ENCODE measurements at regions of chr2 and their contacts with region 1.

Region 1: DNA sequence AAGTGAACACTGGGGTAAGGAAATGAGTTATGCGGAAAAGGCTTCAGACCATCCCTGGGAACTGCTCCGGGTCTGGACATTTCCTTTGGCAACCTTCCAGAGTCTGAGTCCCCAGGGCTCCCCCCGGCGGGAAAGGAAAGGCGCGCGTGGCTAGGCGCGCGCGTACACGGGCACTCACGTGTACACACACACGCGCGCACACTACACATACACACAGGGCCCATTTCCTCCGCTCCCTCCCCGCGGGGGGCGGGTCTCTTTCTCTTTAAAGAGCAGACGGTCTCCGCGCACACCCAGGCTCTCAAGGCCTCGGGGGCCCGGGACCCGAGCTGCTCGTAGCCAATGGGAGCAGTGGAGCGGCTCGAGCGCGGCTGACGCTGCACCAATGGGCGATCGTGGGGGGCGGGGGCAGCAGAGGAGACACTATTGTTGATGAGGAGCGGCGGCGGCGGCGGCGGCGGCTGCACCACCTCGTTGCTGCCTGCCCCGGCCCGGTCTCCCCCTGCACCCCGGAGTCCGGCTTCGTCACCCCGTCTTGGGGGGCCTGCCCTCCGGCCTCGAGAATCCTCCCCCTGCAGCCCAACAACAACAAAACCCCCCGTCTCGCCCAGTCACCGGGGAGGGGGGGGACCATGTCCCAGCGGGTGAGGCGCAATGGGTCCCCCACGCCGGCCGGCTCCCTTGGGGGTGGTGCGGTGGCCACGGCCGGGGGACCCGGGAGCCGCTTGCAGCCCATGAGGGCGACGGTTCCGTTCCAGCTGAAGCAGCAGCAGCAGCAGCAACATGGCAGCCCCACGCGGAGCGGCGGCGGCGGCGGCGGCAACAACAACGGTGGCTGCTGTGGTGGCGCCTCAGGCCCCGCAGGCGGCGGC is at the start of gene FAM117B:
- DNase-seq: peak; percentile 99 to 100
- H3K4me3 ChIP-seq: peak within 1 kb of the TSS; percentile 98 to 99
- H3K27ac ChIP-seq: peak within 1 kb of the TSS; percentile 89 to 94
- H3K4me1 ChIP-seq: peaks cover 0 to 30% (median 6%) of the 10 kb centered on the region in 4 donors
- H3K27me3 ChIP-seq: no peaks in the 10 kb centered on the region
- CTCF ChIP-seq: no peak

Region 2: DNA sequence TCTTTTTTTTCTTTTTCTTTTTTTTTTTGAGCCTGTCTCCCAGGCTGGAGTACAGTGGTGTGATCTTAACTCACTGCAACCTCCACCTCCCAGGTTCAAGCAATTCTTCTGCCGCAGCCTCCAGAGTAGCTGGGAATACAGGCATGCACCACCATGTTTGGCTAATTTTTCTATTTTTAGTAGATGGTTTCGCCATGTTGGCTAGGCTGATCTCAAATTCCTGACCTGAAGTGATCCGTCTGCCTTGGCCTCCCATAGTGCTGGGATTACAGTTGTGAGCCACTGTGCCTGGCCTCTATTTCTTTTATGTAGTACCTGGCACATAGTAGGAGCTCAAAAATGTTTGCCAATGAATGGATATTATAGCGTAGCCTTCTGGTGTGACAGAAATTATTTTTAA is 1525.6 kb before region 1 on chr2:
- intact Hi-C with region 1: no loop called
- DNase-seq: no peak
- H3K4me3 ChIP-seq: no peak overlapping the region
- H3K27ac ChIP-seq: no peak overlapping the region
- H3K4me1 ChIP-seq: no peaks in the 10 kb centered on the region
- H3K27me3 ChIP-seq: no peaks in the 10 kb centered on the region
- CTCF ChIP-seq: no peak

Region 3: DNA sequence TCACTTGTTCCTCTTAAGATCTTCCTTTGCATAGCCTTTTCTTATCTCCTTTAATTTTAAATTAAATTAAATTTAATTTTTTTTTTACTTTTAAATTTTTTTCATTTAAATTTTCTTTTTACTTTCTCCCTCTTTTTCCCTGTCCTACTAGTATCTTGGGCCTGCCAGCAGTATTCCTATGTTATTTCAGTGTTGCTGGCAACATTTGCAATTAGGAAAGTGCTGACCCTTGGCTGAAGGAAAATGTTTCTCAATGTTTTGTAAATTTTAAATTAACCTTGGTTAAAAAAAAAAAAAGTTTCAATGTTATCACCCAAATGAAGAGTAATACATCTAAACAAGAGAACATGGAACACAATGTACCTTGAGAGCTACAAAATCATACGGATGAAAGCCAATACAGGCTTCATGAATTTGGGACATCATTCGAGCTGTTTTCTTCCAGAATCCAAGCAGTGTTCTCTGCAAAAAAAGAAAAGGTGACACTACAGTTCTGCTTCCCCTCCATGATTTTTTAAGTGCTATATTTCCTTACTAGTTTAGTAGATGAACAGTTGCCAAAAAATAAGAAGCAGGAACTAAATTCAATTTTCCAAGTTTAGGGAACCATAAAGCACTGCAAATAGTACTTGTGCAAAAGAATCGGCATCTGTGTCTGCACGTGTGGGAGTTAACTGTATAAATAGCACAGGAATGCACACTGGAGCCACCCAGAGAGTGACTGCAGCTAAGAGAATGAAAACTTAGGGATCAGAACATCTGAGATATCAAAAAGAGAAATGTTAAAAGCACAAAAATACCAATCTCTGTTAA is 181.0 kb after region 1 on chr2:
- intact Hi-C with region 1: loop called (anchors 10 kb)
- DNase-seq: peak in 1 of 2 donors; percentile 29
- H3K4me3 ChIP-seq: peak overlapping the region in 1 of 2 donors; percentile 9
- H3K27ac ChIP-seq: peak overlapping the region; percentile 68 to 70
- H3K4me1 ChIP-seq: peaks cover 0 to 34% (median 19%) of the 10 kb centered on the region in 4 donors
- H3K27me3 ChIP-seq: no peaks in the 10 kb centered on the region
- CTCF ChIP-seq: no peak

Region 4: DNA sequence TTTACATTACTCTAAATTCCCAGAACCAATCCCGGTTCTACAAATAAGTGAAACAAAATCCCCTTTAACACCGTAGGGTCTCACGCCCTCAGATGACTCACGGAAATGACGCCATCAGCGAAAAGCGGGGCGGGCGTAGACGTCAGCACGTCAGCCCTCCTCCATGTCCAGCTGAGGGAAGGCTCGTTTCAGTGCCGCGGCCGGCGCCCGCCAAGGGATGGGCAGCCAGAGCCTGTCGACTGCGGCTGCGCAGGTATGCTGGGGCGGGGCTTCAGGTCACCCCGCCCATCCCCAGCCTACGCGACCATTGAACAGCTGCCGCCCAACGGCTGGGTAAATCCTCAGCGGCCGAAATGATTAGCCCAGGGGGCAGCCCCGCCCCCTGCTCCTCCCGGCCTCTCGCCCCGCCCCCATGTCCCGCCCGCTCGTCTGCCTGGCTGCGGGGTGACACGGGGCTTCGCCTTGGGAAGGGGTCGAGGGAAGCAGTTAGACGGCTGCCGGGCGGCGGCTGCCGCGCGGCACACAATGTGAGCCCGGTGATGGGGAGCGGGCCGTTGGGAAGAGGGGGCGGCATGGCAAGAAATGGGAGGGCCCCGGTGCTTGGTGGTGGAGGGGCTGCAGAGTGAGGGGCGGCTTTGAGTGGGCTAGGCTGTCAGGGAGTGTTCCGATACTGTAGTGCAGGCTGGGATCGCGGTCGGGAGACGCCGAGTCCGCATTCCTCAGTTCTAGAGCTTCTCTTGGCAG is 379.8 kb after region 1 on chr2 and contains the start of gene NBEAL1:
- intact Hi-C with region 1: loop called (anchors 10 kb)
- DNase-seq: peak; percentile 97 to 99
- H3K4me3 ChIP-seq: peak within 1 kb of the TSS; percentile 91 to 92
- H3K27ac ChIP-seq: peak within 1 kb of the TSS; percentile 94 to 97
- H3K4me1 ChIP-seq: peaks cover 0 to 7% (median 3%) of the 10 kb centered on the region in 4 donors
- H3K27me3 ChIP-seq: no peaks in the 10 kb centered on the region
- CTCF ChIP-seq: no peak